Motor neuron (in vitro differentiated cells): ENCODE measurements at regions of chr10 and their contacts with region 1.

Region 1: GRCh38 chr10:91887272-91888076 is 21.8 kb downstream of the FGFBP3 start:
- ATAC-seq: peak; percentile 67 to 94 (median 92)
- H3K4me3 ChIP-seq: peak overlapping the region; percentile 21 to 39 (median 32)
- H3K27ac ChIP-seq: peak overlapping the region; percentile 10 to 33
- H3K4me1 ChIP-seq: peaks cover 35 to 40% of the 10 kb centered on the region in 2 donors

Region 2: DNA sequence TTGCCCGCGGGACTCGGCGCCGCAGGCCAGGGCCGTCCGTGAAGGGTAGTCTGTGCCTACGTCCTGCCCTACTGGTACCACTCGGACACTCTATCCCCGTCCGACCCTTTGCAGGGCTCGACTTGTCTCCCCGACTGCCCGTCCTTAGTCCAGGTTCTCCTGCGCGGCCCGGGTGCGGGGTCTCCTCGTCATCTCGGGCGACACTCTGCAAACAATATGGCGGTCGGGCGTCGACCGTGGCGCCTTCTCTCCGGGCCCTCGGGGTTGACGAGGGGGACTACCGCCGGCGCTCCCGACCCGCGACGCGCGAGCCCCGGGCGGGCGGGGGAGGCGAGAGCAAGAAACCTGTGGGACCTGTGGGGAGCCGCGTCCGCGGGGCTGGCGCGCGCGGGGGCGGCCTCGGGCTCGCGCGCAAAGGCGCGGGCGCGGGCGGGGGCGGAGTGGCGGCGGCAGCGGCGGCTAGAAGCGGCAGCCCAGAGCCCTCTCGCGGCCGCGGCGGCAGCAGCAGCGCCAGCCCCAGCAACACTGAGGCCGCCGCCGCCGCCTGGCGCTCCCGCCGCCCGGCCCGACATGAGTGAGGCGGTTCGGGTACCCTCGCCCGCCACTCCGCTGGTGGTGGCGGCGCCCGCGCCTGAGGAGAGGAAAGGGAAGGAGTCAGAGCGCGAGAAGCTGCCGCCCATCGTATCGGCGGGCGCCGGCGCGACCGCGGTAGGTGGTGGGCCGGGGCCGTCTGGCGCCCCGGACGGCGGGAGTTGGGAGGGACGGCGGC is 477.4 kb before region 1 on chr10 and contains the start of gene HECTD2:
- in situ Hi-C with region 1: loop called in 1 of 9 experiments (anchors 25 kb)
- ATAC-seq: peak; percentile 70 to 87 (median 82)
- H3K4me3 ChIP-seq: peak within 1 kb of the TSS; percentile 79 to 93 (median 86)
- H3K27ac ChIP-seq: peak within 1 kb of the TSS; percentile 98
- H3K4me1 ChIP-seq: peaks cover 5 to 26% of the 10 kb centered on the region in 2 donors
- total RNA-seq, gene HECTD2: 4.5 to 28.1 (median 18.3) TPM